Naive thymus-derived CD8-positive, alpha-beta T cell (primary cell): ENCODE measurements at regions of chr7 and their contacts with region 1.

Region 1: GRCh38 chr7:27172823-27173510 is 1.2 kb downstream of the HOXA10 start:
- DNase-seq: peak in 2 of 10 donors; percentile 16 to 59
- ATAC-seq: peak; percentile 34 to 37
- H3K4me3 Mint-ChIP-seq: peak overlapping the region; percentile 15 to 78 (median 56)
- H3K27ac Mint-ChIP-seq: peak overlapping the region in 1 of 10 donors; percentile 80
- H3K4me1 Mint-ChIP-seq: peaks cover 17 to 36% (median 30%) of the 10 kb centered on the region in 4 donors
- H3K27me3 Mint-ChIP-seq: peaks cover 39 to 83% (median 63%) of the 10 kb centered on the region in 5 donors

Region 2: GRCh38 chr7:26723129-26723528 is 449.8 kb before region 1 on chr7:
- POLR2A ChIA-PET with region 1: no interaction called
- DNase-seq: no peak
- ATAC-seq: no peak
- H3K4me3 Mint-ChIP-seq: no peak overlapping the region
- H3K27ac Mint-ChIP-seq: no peak overlapping the region
- H3K4me1 Mint-ChIP-seq: peaks cover 0 to 4% (median 0%) of the 10 kb centered on the region in 4 donors
- H3K27me3 Mint-ChIP-seq: peaks cover 0 to 10% (median 0%) of the 10 kb centered on the region in 5 donors

Region 3: GRCh38 chr7:27184337-27185012 is 11.5 kb after region 1 on chr7:
- POLR2A ChIA-PET with region 1: interaction called, 18 read pairs
- DNase-seq: no peak
- ATAC-seq: peak; percentile 9 to 27
- H3K4me3 Mint-ChIP-seq: peak overlapping the region; percentile 67 to 85 (median 81)
- H3K27ac Mint-ChIP-seq: peak overlapping the region in 3 of 10 donors; percentile 32 to 91 (median 85)
- H3K4me1 Mint-ChIP-seq: peaks cover 33 to 60% (median 50%) of the 10 kb centered on the region in 4 donors
- H3K27me3 Mint-ChIP-seq: peaks cover 48 to 96% (median 69%) of the 10 kb centered on the region in 5 donors